GM12878 (cell line): ENCODE measurements at regions of chrX and their contacts with region 1.

Region 1: DNA sequence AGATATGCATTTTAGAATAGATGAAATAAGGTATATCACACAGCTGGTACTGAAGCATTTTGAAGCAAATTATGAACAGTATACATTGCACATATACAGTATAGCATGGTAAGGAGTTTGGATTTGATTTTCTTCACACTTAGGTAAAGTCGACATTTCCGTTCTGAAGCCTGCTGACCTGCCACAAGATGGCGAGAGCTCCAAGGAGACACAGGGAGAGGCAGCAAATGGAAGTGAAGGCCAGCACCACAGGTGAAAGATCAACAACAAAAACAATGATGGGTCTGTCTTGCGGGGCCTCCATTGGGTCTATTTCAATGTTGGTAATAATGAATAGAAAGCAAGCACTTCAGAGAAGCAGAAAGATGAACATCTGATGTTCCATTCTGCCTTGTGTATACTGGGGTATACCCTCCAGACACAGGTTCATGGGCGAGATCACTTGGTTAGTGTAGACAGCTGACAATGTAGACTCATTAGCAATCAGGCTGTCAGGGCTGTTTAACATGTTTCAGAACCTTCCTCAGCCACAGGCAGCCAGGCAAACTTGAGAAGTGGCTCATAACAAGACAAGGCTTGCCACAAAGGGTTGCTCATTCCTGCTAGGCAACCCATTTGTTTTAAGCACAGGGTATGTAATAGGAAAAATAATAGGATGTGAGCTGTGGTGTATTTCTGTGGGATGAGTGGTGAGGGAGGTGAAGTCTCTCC is 21.4 kb upstream of the NOX1 start:
- DNase-seq: no peak
- ATAC-seq: peak; percentile 91
- H3K4me3 ChIP-seq: no peak overlapping the region
- H3K27ac ChIP-seq: no peak overlapping the region
- H3K4me1 ChIP-seq: no peaks in the 10 kb centered on the region
- H3K27me3 ChIP-seq: no peaks in the 10 kb centered on the region
- CTCF ChIP-seq: peak; percentile 53 to 61 (median 55); a peak in 4 of 6 replicates
- EP300 ChIP-seq: no peak
- POLR2A ChIP-seq: no peak
- RAD21 ChIP-seq: peak; percentile 78

Region 2: GRCh38 chrX:100915007-100915406 is 19.5 kb after region 1 on chrX:
- CTCF ChIA-PET with region 1: no interaction called
- POLR2A ChIA-PET with region 1: no interaction called
- RAD21 ChIA-PET with region 1: no interaction called
- SMC1A ChIA-PET with region 1: no interaction called
- in situ Hi-C with region 1: no loop called
- intact Hi-C with region 1: no loop called
- DNase-seq: no peak
- ATAC-seq: no peak
- H3K4me3 ChIP-seq: no peak overlapping the region
- H3K27ac ChIP-seq: no peak overlapping the region
- H3K4me1 ChIP-seq: no peaks in the 10 kb centered on the region
- H3K27me3 ChIP-seq: no peaks in the 10 kb centered on the region
- CTCF ChIP-seq: no peak
- EP300 ChIP-seq: no peak
- POLR2A ChIP-seq: no peak
- RAD21 ChIP-seq: no peak

Region 3: GRCh38 chrX:100939333-100939732 is 43.8 kb after region 1 on chrX:
- CTCF ChIA-PET with region 1: no interaction called
- POLR2A ChIA-PET with region 1: no interaction called
- RAD21 ChIA-PET with region 1: no interaction called
- SMC1A ChIA-PET with region 1: no interaction called
- in situ Hi-C with region 1: no loop called
- intact Hi-C with region 1: no loop called
- DNase-seq: no peak
- ATAC-seq: no peak
- H3K4me3 ChIP-seq: no peak overlapping the region
- H3K27ac ChIP-seq: no peak overlapping the region
- H3K4me1 ChIP-seq: no peaks in the 10 kb centered on the region
- H3K27me3 ChIP-seq: no peaks in the 10 kb centered on the region
- CTCF ChIP-seq: no peak
- EP300 ChIP-seq: no peak
- POLR2A ChIP-seq: no peak
- RAD21 ChIP-seq: no peak

Region 4: GRCh38 chrX:101206471-101206870 is 311.0 kb after region 1 on chrX:
- CTCF ChIA-PET with region 1: interaction called, 5 read pairs
- POLR2A ChIA-PET with region 1: no interaction called
- RAD21 ChIA-PET with region 1: no interaction called
- SMC1A ChIA-PET with region 1: no interaction called
- in situ Hi-C with region 1: loop called (anchors 5 kb)
- intact Hi-C with region 1: loop called (anchors 5 kb)
- DNase-seq: no peak
- ATAC-seq: peak; percentile 89
- H3K4me3 ChIP-seq: no peak overlapping the region
- H3K27ac ChIP-seq: no peak overlapping the region
- H3K4me1 ChIP-seq: no peaks in the 10 kb centered on the region
- H3K27me3 ChIP-seq: no peaks in the 10 kb centered on the region
- CTCF ChIP-seq: peak; percentile 41 to 55 (median 46); a peak in 5 of 6 replicates
- EP300 ChIP-seq: no peak
- POLR2A ChIP-seq: no peak
- RAD21 ChIP-seq: peak; percentile 69

Region 5: DNA sequence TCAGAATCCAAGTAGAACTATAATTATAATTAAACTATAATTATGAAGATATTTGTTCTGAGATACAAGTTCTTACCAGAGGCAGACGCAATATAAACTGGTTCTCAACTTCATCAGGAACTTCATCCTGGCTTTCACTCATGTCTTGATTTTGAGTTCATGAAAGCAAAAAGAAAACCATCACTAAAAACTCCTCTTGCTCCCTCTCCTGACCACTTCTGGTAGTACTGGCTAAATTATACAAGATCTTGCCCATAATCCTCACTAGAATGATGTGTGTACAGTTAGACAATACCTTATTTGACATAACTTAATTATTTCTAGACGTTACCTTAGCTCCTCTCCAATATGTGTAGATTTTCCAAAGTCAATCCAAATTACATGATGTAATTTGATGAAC is 391.9 kb after region 1 on chrX:
- CTCF ChIA-PET with region 1: interaction called, 3 read pairs
- POLR2A ChIA-PET with region 1: no interaction called
- RAD21 ChIA-PET with region 1: interaction called, 3 read pairs
- SMC1A ChIA-PET with region 1: interaction called, 4 read pairs
- in situ Hi-C with region 1: loop called (anchors 10 kb)
- intact Hi-C with region 1: loop called (anchors 2 kb)
- DNase-seq: peak; percentile 3
- ATAC-seq: peak; percentile 80
- H3K4me3 ChIP-seq: no peak overlapping the region
- H3K27ac ChIP-seq: no peak overlapping the region
- H3K4me1 ChIP-seq: no peaks in the 10 kb centered on the region
- H3K27me3 ChIP-seq: no peaks in the 10 kb centered on the region
- CTCF ChIP-seq: peak; percentile 55 to 58 (median 57); a peak in 5 of 6 replicates
- EP300 ChIP-seq: no peak
- POLR2A ChIP-seq: no peak
- RAD21 ChIP-seq: peak; percentile 62